Caco-2 (cell line): ENCODE measurements at regions of chr9 and their contacts with region 1.

Region 1: GRCh38 chr9:116646661-116647512 is 40.2 kb upstream of the TRIM32 start:
- DNase-seq: peak in 1 of 2 experiments; percentile 49
- H3K4me3 ChIP-seq: no peak overlapping the region
- H3K4me3 Mint-ChIP-seq: no peak overlapping the region
- H3K27ac Mint-ChIP-seq: no peak overlapping the region
- H3K4me1 ChIP-seq: peaks cover 5% of the 10 kb centered on the region; the same call in 1 of the 2 replicates
- H3K4me1 Mint-ChIP-seq: peaks cover 6% of the 10 kb centered on the region
- H3K27me3 ChIP-seq: no peaks in the 10 kb centered on the region
- H3K27me3 Mint-ChIP-seq: no peaks in the 10 kb centered on the region
- CTCF ChIP-seq: peak; percentile 58 to 71

Region 2: DNA sequence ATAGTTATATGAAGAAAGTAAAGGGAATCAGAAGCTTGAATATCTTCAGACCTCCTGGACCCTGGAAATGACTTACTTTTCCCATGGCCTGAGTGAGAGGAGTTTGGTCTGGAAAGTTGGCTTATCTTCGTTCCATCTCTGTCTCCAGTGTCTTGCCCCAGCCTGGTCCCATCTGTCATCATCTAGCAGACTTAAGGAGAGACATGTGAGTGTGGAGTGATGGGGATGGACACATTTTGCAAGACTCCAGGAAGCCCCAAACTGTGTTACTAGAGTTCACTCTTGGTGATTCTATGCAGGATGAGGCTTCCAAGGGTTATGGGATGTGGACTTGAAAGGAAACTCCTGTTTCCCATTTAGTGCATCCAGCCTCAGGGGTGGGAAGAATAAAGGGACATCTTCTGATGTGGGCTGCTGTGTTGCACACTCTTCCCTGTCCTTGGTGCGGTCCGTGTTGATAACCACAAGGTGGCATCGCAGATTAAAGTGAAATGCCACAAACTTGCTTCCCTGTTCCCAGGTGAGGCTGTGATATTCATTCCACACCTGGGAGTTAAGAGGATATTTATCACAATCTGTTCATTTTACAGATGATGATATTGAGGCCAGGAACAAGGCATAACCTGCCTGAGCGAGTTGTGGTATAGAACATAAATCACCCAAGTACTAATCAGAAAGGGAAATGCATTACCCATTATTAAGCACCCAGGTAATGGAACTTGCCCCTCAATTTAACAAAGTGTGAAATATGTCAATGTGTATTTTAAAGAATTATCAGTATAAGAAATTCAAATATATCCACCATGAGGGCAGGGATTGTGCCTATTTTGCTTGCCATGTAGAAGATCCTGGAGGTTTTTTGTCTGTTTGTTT is 763.2 kb before region 1 on chr9:
- CTCF ChIA-PET with region 1: no interaction called
- POLR2A ChIA-PET with region 1: no interaction called
- intact Hi-C with region 1: loop called (anchors 5 kb)
- DNase-seq: peak; percentile 37 to 42
- H3K4me3 ChIP-seq: no peak overlapping the region
- H3K4me3 Mint-ChIP-seq: no peak overlapping the region
- H3K27ac Mint-ChIP-seq: no peak overlapping the region
- H3K4me1 ChIP-seq: no peaks in the 10 kb centered on the region
- H3K4me1 Mint-ChIP-seq: no peaks in the 10 kb centered on the region
- H3K27me3 ChIP-seq: no peaks in the 10 kb centered on the region
- H3K27me3 Mint-ChIP-seq: peaks cover 12% of the 10 kb centered on the region
- CTCF ChIP-seq: peak; percentile 63 to 67

Region 3: DNA sequence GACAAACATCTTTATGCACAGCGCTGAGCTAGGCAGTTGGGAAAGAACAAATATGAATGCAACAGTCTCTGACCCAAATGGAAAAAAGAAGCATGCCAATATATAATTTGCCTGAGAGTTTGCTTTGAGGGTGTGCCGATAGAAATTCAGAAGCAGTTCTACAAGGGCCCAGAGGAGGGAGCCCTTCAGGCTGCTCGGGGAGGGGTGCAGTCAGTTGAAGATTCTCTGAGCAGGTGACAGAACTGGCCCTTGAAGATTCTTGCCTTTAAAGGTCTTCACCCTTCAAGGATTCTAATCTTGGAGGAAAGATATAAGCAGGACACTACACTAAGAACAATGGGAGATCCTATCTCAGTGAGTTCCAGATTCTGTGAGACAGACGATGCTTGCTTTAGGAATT is 497.0 kb before region 1 on chr9:
- CTCF ChIA-PET with region 1: interaction called, 4 read pairs
- POLR2A ChIA-PET with region 1: no interaction called
- intact Hi-C with region 1: loop called (anchors 1 kb)
- DNase-seq: peak; percentile 40 to 52
- H3K4me3 ChIP-seq: no peak overlapping the region
- H3K4me3 Mint-ChIP-seq: no peak overlapping the region
- H3K27ac Mint-ChIP-seq: no peak overlapping the region
- H3K4me1 ChIP-seq: no peaks in the 10 kb centered on the region
- H3K4me1 Mint-ChIP-seq: peaks cover 12% of the 10 kb centered on the region
- H3K27me3 ChIP-seq: peaks cover 2% of the 10 kb centered on the region
- H3K27me3 Mint-ChIP-seq: peaks cover 20% of the 10 kb centered on the region
- CTCF ChIP-seq: peak; percentile 70 to 75

Region 4: DNA sequence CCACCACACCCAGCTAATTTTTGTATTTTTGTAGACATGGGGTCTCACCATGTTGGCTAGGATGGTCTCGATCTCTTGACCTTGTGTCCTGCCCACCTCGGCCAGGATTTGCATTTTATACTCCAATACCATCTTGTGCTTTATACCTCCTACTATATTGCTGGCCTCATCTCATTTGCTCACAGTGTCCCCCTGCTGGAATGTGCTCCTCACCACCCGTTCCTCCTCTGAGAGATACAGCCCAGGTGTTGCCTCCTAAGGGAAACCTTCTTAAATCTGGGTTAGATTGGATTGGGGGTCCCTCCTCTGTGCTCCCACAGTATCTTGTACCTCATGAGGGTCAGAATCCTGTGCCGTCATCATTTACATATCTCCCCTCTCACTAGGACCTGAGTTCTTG is 361.6 kb before region 1 on chr9:
- CTCF ChIA-PET with region 1: no interaction called
- POLR2A ChIA-PET with region 1: no interaction called
- intact Hi-C with region 1: loop called (anchors 2 kb)
- DNase-seq: no peak
- H3K4me3 ChIP-seq: no peak overlapping the region
- H3K4me3 Mint-ChIP-seq: no peak overlapping the region
- H3K27ac Mint-ChIP-seq: no peak overlapping the region
- H3K4me1 ChIP-seq: no peaks in the 10 kb centered on the region
- H3K4me1 Mint-ChIP-seq: no peaks in the 10 kb centered on the region
- H3K27me3 ChIP-seq: no peaks in the 10 kb centered on the region; the same call in 1 of the 2 replicates
- H3K27me3 Mint-ChIP-seq: peaks cover 7% of the 10 kb centered on the region
- CTCF ChIP-seq: peak in 1 of 2 experiments; percentile 14

Region 5: DNA sequence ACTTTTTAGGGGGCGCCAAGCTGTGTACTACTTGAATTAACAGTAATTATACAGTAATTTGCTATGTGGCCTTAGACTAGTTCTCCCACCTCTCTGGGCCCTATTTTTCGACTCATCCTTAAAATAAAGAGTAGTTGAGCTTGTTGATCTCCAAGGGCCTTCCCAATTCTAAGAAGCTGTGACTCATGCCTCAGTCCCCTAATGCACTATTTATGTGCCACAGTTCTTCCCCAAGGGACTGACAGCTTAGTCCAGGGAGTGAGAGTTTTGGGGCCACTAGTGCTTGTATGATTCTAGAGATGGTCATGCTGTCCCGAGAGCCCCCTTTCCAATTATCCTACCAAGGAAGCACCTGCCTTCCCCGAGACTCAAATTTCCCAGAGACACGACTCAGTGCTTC is 343.6 kb before region 1 on chr9:
- CTCF ChIA-PET with region 1: no interaction called
- POLR2A ChIA-PET with region 1: no interaction called
- intact Hi-C with region 1: no loop called
- DNase-seq: no peak
- H3K4me3 ChIP-seq: no peak overlapping the region
- H3K4me3 Mint-ChIP-seq: no peak overlapping the region
- H3K27ac Mint-ChIP-seq: no peak overlapping the region
- H3K4me1 ChIP-seq: no peaks in the 10 kb centered on the region
- H3K4me1 Mint-ChIP-seq: no peaks in the 10 kb centered on the region
- H3K27me3 ChIP-seq: no peaks in the 10 kb centered on the region; the same call in 1 of the 2 replicates
- H3K27me3 Mint-ChIP-seq: peaks cover 15% of the 10 kb centered on the region
- CTCF ChIP-seq: no peak

Region 6: GRCh38 chr9:116337015-116337414 is 309.9 kb before region 1 on chr9:
- CTCF ChIA-PET with region 1: no interaction called
- POLR2A ChIA-PET with region 1: no interaction called
- intact Hi-C with region 1: loop called (anchors 10 kb)
- DNase-seq: no peak
- H3K4me3 ChIP-seq: no peak overlapping the region
- H3K4me3 Mint-ChIP-seq: no peak overlapping the region
- H3K27ac Mint-ChIP-seq: no peak overlapping the region
- H3K4me1 ChIP-seq: no peaks in the 10 kb centered on the region
- H3K4me1 Mint-ChIP-seq: peaks cover 5% of the 10 kb centered on the region
- H3K27me3 ChIP-seq: no peaks in the 10 kb centered on the region
- H3K27me3 Mint-ChIP-seq: peaks cover 15% of the 10 kb centered on the region
- CTCF ChIP-seq: no peak

Region 7: GRCh38 chr9:116494815-116495634 is 151.9 kb before region 1 on chr9:
- CTCF ChIA-PET with region 1: interaction called, 3 read pairs
- POLR2A ChIA-PET with region 1: no interaction called
- intact Hi-C with region 1: loop called (anchors 1 kb)
- DNase-seq: peak in 1 of 2 experiments; percentile 30
- H3K4me3 ChIP-seq: no peak overlapping the region
- H3K4me3 Mint-ChIP-seq: no peak overlapping the region
- H3K27ac Mint-ChIP-seq: no peak overlapping the region
- H3K4me1 ChIP-seq: peaks cover 6% of the 10 kb centered on the region
- H3K4me1 Mint-ChIP-seq: peaks cover 5% of the 10 kb centered on the region
- H3K27me3 ChIP-seq: no peaks in the 10 kb centered on the region
- H3K27me3 Mint-ChIP-seq: no peaks in the 10 kb centered on the region
- CTCF ChIP-seq: peak; percentile 41 to 64

Region 8: GRCh38 chr9:116589392-116590354 is 57.2 kb before region 1 on chr9:
- CTCF ChIA-PET with region 1: interaction called, 3 read pairs
- POLR2A ChIA-PET with region 1: no interaction called
- intact Hi-C with region 1: loop called (anchors 1 kb)
- DNase-seq: peak in 1 of 2 experiments; percentile 50
- H3K4me3 ChIP-seq: no peak overlapping the region
- H3K4me3 Mint-ChIP-seq: no peak overlapping the region
- H3K27ac Mint-ChIP-seq: no peak overlapping the region
- H3K4me1 ChIP-seq: no peaks in the 10 kb centered on the region
- H3K4me1 Mint-ChIP-seq: no peaks in the 10 kb centered on the region
- H3K27me3 ChIP-seq: no peaks in the 10 kb centered on the region
- H3K27me3 Mint-ChIP-seq: no peaks in the 10 kb centered on the region
- CTCF ChIP-seq: peak; percentile 54 to 75

Region 9: DNA sequence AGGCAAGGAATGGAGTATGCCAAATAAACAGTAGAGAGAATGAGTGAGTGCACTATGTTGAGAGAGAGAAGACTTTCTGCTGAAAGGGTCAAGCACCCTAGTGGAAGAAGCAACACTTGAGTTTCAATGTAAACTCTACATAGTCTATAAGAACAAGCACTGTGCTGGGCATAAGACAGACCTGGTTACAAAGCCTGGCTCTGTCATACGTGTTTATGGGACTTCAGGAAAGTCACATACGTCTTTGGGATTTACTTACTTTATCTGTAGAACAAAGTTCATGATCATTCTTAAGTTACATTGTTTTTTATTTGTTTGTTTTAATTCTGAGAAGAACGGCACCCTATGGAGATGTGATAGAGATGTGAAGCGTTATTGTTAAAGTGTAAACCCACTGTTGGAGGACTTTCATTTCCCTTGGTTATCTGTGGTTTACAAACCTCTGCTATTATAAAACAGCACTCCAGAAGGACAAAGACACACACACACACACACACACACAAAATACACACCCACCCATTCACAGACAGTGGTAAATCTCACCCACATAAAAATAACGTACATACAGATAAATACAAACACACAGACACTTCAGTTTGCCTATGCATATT is 30.5 kb before region 1 on chr9:
- CTCF ChIA-PET with region 1: no interaction called
- POLR2A ChIA-PET with region 1: no interaction called
- intact Hi-C with region 1: no loop called
- DNase-seq: no peak
- H3K4me3 ChIP-seq: no peak overlapping the region
- H3K4me3 Mint-ChIP-seq: no peak overlapping the region
- H3K27ac Mint-ChIP-seq: no peak overlapping the region
- H3K4me1 ChIP-seq: no peaks in the 10 kb centered on the region
- H3K4me1 Mint-ChIP-seq: no peaks in the 10 kb centered on the region
- H3K27me3 ChIP-seq: no peaks in the 10 kb centered on the region
- H3K27me3 Mint-ChIP-seq: no peaks in the 10 kb centered on the region
- CTCF ChIP-seq: no peak

Region 10: DNA sequence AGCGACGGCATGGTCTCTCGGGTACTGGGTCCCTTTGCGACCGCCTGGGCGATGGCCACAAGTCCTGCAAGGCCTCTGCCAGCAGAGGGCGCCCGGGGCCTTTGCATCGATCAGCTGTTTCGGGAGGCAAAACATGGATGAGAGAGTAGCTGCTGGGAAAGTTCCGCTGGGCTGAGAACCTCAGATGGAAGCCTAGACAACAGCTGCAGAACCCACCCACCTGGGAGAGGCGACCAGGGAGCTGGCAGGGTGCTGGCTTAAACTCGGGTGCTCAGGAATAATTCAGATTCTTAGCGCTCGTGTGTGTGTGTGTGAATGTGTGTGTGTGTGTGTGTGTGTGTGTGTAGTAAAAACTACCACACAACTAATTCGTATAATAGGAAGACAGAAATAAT is 90.3 kb after region 1 on chr9:
- CTCF ChIA-PET with region 1: no interaction called
- POLR2A ChIA-PET with region 1: no interaction called
- intact Hi-C with region 1: no loop called
- DNase-seq: peak; percentile 85 to 90
- H3K4me3 ChIP-seq: no peak overlapping the region
- H3K4me3 Mint-ChIP-seq: no peak overlapping the region
- H3K27ac Mint-ChIP-seq: no peak overlapping the region
- H3K4me1 ChIP-seq: no peaks in the 10 kb centered on the region
- H3K4me1 Mint-ChIP-seq: peaks cover 7% of the 10 kb centered on the region
- H3K27me3 ChIP-seq: no peaks in the 10 kb centered on the region
- H3K27me3 Mint-ChIP-seq: peaks cover 4% of the 10 kb centered on the region
- CTCF ChIP-seq: peak; percentile 89 to 97